Calu3 (cell line): ENCODE measurements at regions of chr15 and their contacts with region 1.

Region 1: DNA sequence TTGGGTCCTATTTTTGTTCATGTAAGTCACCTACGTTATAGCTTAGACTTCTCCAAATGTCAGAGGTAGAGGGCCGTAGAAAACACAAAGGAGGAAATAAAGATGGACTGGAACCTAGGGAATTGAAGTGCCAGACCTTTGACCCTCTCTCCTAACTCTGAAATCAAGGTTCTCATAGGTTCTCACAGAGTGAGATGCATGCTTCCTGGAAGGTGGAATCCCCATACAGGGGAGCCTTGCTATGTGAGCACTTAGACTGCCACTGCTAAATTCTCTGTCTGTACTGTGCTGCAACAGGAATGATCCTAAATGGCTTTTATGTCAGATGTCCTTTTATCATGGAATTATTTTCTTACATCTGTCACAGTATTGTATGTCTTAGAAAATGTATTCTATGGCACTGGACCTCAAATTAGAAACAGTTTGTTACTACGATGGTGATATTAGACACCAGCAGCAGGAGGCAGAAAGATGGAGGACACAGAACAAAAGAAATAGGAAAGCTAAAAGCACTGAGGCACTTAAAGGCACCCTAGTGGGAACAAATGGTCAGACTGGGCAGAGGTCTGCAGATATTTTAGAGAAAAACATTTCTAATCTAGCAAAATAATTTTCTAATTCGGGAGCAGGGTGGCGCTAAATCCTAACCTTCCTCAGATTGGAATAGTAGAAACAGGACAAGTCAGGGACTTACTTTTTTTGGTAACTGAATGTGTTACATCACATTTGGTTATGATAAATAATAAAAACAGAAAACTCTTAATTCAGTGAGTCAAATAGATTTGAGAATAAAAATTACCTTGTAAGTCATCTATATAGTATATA is 60.2 kb upstream of the CDAN1 start:
- DNase-seq: no peak
- H3K4me3 Mint-ChIP-seq: no peak overlapping the region
- H3K27ac Mint-ChIP-seq: no peak overlapping the region
- H3K4me1 Mint-ChIP-seq: no peaks in the 10 kb centered on the region
- H3K27me3 Mint-ChIP-seq: no peaks in the 10 kb centered on the region
- CTCF ChIP-seq: no peak

Region 2: DNA sequence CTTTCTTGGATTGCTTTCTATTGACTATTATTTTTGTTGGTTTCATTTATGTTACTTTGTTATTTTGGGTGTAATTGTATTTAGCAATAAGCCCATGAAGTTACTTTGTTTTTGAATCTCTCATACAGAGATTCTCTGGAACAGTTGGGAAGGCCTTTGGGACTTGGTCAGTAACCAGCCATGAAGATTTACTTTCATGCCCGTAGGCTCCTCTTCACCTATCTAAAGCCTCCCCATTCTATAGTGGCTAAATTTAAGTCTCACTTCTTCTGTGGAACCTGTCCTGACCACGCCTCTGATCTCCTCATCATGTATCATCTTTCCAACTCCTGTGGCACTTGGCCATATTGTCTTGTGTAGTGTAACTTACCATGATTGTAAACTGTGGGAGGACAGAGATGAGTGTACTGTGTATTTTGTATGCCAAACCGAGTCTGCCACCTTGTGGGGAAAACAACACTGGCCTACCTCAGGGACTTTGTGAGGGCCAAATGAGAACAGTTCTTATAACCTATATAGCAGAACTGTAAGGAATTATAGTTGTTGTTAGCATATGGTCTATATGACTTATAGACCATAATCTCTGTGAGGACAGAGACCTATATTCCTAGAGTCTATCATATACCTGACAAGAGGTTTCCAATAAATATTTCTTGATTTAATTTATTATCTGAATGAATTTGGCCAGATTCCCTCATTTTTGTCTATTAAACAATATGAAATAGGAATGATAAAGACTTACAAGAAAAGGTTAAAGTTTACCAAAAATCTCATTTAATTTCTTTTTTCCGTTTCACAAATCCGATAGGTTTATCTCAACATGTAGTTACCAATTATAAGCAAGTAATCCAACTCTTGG is 146.7 kb before region 1 on chr15:
- CTCF ChIA-PET with region 1: no interaction called
- intact Hi-C with region 1: no loop called
- DNase-seq: peak; percentile 36
- H3K4me3 Mint-ChIP-seq: no peak overlapping the region
- H3K27ac Mint-ChIP-seq: no peak overlapping the region
- H3K4me1 Mint-ChIP-seq: no peaks in the 10 kb centered on the region
- H3K27me3 Mint-ChIP-seq: no peaks in the 10 kb centered on the region
- CTCF ChIP-seq: no peak

Region 3: DNA sequence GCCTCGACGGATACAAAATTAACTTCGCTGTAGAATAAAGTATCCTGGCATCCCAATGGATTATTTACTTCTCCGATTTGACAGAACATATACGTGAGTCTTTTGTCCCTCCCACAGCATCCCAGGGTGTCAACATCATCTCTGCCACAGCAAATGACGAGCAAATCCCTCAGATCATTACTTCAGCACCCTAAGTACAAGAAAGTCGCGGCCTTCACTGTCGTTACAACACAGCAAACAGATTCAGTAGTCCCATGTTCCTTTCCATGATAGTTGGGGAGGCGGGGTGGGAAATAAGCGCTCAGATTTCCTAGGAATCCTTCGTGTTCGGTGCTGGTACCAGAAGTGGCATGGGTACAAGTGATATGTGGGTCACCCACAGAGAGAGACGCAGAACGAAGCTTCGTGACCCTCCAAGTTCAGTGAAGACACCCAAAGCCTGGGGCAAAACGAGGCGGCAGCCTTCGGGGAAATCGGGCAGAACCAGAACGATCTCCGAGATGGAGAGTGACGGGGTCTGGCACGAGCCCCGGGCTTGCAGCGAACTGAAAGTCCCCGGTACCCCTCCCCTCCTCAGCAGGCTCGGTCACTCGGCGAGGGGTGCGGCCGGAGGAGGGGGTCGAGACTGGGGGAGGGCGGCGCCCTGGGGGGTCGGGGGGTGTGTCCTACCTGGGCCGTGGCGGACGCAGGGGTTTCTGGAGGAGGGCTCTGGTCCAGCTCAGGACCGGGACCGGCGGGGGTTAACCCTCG is 122.8 kb after region 1 on chr15:
- CTCF ChIA-PET with region 1: no interaction called
- intact Hi-C with region 1: loop called (anchors 5 kb)
- DNase-seq: no peak
- H3K4me3 Mint-ChIP-seq: peak overlapping the region; percentile 89
- H3K27ac Mint-ChIP-seq: no peak overlapping the region
- H3K4me1 Mint-ChIP-seq: no peaks in the 10 kb centered on the region
- H3K27me3 Mint-ChIP-seq: no peaks in the 10 kb centered on the region
- CTCF ChIP-seq: no peak

Region 4: DNA sequence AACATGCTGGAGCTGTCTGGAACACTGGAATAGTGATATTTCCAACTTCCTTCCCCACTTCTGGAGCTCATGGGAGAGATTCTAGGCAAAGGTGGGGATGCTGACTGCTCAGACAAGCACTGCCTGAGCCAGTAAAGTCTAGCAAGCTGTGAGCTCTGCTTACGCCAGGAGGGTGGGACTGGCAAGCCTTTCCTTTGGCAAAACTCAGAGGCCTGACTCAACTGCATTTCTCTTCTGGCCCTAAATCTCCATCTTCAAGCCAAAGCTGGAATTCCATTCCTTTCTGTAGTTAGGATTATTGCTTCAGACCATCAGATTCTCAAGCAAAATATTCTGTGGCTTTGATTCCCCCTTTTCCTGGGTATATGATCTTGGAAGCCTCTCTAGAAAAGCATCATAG is 443.9 kb after region 1 on chr15:
- CTCF ChIA-PET with region 1: no interaction called
- intact Hi-C with region 1: no loop called
- DNase-seq: no peak
- H3K4me3 Mint-ChIP-seq: no peak overlapping the region
- H3K27ac Mint-ChIP-seq: no peak overlapping the region
- H3K4me1 Mint-ChIP-seq: no peaks in the 10 kb centered on the region
- H3K27me3 Mint-ChIP-seq: peaks cover 28% of the 10 kb centered on the region
- CTCF ChIP-seq: no peak

Region 5: GRCh38 chr15:44711356-44712107 is 1914.4 kb after region 1 on chr15 and contains the start of gene B2M:
- CTCF ChIA-PET with region 1: no interaction called
- intact Hi-C with region 1: no loop called
- DNase-seq: peak; percentile 87
- H3K4me3 Mint-ChIP-seq: peak within 1 kb of the TSS; percentile 97
- H3K27ac Mint-ChIP-seq: peak within 1 kb of the TSS; percentile 93
- H3K4me1 Mint-ChIP-seq: no peaks in the 10 kb centered on the region
- H3K27me3 Mint-ChIP-seq: no peaks in the 10 kb centered on the region
- CTCF ChIP-seq: no peak
- total RNA-seq, gene B2M: 1,002 and 1,731 TPM in 2 replicates